Activated CD4-positive, alpha-beta T cell treated with anti-CD3 and anti-CD28 coated beads, Interleukin-2, amount 10 ng/mL, durations not matched to agents 24 days and 14 days (primary cell): ENCODE measurements at regions of chr6 and their contacts with region 1.

Region 1: DNA sequence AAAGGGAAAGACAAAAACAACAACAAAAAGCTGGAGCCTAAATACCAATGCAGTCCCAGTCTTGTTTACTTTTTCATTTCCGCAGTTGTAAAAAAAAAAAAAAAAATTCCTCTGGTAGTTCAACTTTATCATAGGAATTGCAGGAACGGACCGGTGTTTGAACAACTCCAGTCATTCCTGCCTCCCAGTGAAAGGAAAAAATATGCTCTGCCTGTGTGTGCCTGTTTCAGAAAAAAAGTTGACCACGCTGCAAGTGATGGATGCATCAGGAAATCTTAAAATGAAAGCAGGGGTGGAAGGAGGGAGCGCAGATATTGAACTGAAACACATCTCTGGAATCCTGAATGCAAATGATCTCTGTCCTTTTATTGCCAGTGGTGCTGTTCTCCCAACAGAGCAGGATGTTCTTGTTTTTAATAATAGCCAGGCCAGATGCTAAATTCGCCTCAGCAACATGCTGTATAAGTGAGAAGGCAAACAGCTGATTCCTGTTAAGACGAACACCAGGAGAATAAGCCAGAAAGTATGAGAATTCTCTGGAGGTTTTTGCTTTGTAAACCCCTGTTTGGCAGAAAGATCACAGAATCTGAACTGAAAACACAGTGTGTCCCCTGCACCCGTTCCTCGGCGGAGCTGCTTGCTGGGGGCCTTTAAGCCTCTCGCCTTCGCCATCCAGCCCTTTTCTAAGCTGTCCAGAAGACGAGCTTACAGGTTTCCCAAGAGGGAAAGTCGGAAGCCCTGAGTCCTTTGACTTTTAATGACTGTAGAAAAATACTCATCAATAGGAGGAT is 178.4 kb upstream of the SUPT3H start:
- DNase-seq: no peak
- H3K4me3 Mint-ChIP-seq: no peak overlapping the region
- H3K27ac Mint-ChIP-seq: no peak overlapping the region
- H3K4me1 Mint-ChIP-seq: peaks cover 41% of the 10 kb centered on the region
- H3K27me3 Mint-ChIP-seq: no peaks in the 10 kb centered on the region

Region 2: GRCh38 chr6:45105170-45105820 is 450.9 kb before region 1 on chr6:
- intact Hi-C with region 1: no loop called
- DNase-seq: no peak
- H3K4me3 Mint-ChIP-seq: no peak overlapping the region
- H3K27ac Mint-ChIP-seq: no peak overlapping the region
- H3K4me1 Mint-ChIP-seq: peaks cover 11% of the 10 kb centered on the region
- H3K27me3 Mint-ChIP-seq: no peaks in the 10 kb centered on the region

Region 3: GRCh38 chr6:45436544-45437438 is 119.4 kb before region 1 on chr6:
- intact Hi-C with region 1: loop called (anchors 10 kb)
- DNase-seq: peak; percentile 75
- H3K4me3 Mint-ChIP-seq: peak overlapping the region; percentile 79
- H3K27ac Mint-ChIP-seq: peak overlapping the region; percentile 91
- H3K4me1 Mint-ChIP-seq: peaks cover 60% of the 10 kb centered on the region
- H3K27me3 Mint-ChIP-seq: no peaks in the 10 kb centered on the region

Region 4: GRCh38 chr6:45543298-45544235 is 12.6 kb before region 1 on chr6:
- intact Hi-C with region 1: loop called (anchors 2 kb)
- DNase-seq: no peak
- H3K4me3 Mint-ChIP-seq: no peak overlapping the region
- H3K27ac Mint-ChIP-seq: no peak overlapping the region
- H3K4me1 Mint-ChIP-seq: peaks cover 23% of the 10 kb centered on the region
- H3K27me3 Mint-ChIP-seq: no peaks in the 10 kb centered on the region

Region 5: GRCh38 chr6:45584127-45584526 is 28.0 kb after region 1 on chr6:
- intact Hi-C with region 1: loop called (anchors 2 kb)
- DNase-seq: peak; percentile 64
- H3K4me3 Mint-ChIP-seq: no peak overlapping the region
- H3K27ac Mint-ChIP-seq: peak overlapping the region; percentile 88
- H3K4me1 Mint-ChIP-seq: peaks cover 42% of the 10 kb centered on the region
- H3K27me3 Mint-ChIP-seq: no peaks in the 10 kb centered on the region